K562 (cell line): ENCODE measurements at regions of chr6 and their contacts with region 1.

Region 1: DNA sequence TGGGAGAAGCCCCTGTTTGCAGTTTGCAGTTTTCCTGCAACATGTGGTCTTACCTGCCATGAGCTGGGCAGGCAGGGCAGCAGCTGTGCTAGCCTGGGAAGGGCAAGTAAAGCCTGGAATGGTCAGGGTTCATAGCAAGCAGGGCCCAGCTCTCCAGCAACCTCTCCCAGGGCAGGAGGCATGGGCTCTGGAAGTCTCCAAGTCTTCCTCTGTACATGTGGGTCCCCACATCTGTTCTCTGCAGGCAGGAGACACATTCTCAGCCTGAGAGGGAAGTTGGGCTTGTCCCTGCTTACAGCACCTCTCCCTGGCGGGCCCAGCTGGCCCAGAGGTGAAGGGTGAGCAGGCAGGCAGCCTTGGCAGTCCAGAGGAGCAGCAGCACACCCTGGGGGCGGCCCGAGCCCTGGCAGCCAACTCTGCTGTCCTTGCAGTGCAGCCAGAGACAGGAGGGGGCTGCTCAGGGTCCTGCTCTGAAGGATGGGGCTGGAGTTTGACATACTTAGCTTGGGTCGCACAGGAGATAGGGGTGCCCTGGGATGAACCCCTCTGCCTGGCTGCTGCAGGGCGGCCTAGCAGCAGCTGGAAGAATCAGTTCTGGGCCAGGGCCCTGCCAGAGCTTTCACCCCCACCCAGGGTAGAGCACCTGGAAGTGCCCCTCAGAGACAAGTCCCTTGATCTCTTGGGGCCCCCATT is 176.0 kb downstream of the MRPL14 start:
- DNase-seq: peak; percentile 63 to 78 (median 73)
- ATAC-seq: peak; percentile 85
- H3K4me3 ChIP-seq: no peak overlapping the region
- H3K27ac ChIP-seq: peak overlapping the region; percentile 37; the same call in 2 of the 3 replicates
- H3K4me1 ChIP-seq: peaks cover 29 to 61% of the 10 kb centered on the region in 2 experiments
- H3K27me3 ChIP-seq: no peaks in the 10 kb centered on the region
- CTCF ChIP-seq: peak; percentile 85 to 98 (median 97)
- EP300 ChIP-seq: no peak; the same call in 1 of the 2 replicates
- POLR2A ChIP-seq: no peak
- RAD21 ChIP-seq: peak; percentile 96 to 99

Region 2: DNA sequence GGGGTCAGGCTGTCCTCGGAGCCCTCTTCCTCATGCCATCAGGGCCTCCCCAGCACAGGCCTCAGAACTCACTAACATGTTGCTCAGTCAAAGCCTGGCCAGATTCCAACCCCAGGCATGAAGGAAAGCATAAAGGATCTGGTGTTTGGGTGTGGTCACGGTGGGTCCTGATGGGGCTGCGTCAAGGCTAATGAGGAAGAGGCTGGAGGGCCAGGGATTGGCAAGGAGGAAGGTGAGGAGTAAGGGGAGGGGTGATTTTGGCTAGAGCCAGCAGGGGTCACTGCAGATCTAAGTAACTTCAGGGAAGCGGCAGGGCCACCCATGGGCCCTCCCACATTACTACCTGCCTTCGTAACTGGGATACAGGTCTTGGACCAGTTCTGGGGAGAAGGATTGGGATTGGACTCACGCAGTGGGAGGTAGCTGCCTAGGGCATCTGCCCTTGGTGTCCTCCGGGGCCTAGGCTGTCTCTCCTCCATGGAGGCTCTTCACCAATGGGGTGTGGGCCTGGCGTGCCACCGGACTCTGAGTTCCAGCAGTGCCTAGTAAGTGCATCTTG is 227.4 kb before region 1 on chr6:
- CTCF ChIA-PET with region 1: no interaction called
- POLR2A ChIA-PET with region 1: no interaction called
- in situ Hi-C with region 1: no loop called
- intact Hi-C with region 1: loop called (anchors 1 kb)
- DNase-seq: peak; percentile 91 to 94 (median 93)
- ATAC-seq: peak; percentile 87
- H3K4me3 ChIP-seq: no peak overlapping the region
- H3K27ac ChIP-seq: peak overlapping the region; percentile 68; the same call in 1 of the 3 replicates
- H3K4me1 ChIP-seq: peaks cover 25 to 31% of the 10 kb centered on the region in 2 experiments
- H3K27me3 ChIP-seq: no peaks in the 10 kb centered on the region; a peak in 1 of 5 replicates
- CTCF ChIP-seq: peak; percentile 91 to 98 (median 97)
- EP300 ChIP-seq: 0 out of 2 replicates have a peak, but pooled peaks have one; percentile 2
- POLR2A ChIP-seq: no peak
- RAD21 ChIP-seq: peak; percentile 93 to 97

Region 3: GRCh38 chr6:43856005-43856765 is 95.0 kb before region 1 on chr6:
- CTCF ChIA-PET with region 1: no interaction called
- POLR2A ChIA-PET with region 1: no interaction called
- in situ Hi-C with region 1: no loop called
- intact Hi-C with region 1: loop called (anchors 1 kb)
- DNase-seq: peak; percentile 66 to 80 (median 72)
- ATAC-seq: peak; percentile 92
- H3K4me3 ChIP-seq: no peak overlapping the region
- H3K27ac ChIP-seq: no peak overlapping the region; the same call in 2 of the 3 replicates
- H3K4me1 ChIP-seq: peaks cover 6 to 8% of the 10 kb centered on the region in 2 experiments; a peak in 3 of 5 replicates
- H3K27me3 ChIP-seq: no peaks in the 10 kb centered on the region
- CTCF ChIP-seq: peak; percentile 83 to 89 (median 84)
- EP300 ChIP-seq: 0 out of 2 replicates have a peak, but pooled peaks have one; percentile 19
- POLR2A ChIP-seq: no peak
- RAD21 ChIP-seq: peak; percentile 89 to 92

Region 4: DNA sequence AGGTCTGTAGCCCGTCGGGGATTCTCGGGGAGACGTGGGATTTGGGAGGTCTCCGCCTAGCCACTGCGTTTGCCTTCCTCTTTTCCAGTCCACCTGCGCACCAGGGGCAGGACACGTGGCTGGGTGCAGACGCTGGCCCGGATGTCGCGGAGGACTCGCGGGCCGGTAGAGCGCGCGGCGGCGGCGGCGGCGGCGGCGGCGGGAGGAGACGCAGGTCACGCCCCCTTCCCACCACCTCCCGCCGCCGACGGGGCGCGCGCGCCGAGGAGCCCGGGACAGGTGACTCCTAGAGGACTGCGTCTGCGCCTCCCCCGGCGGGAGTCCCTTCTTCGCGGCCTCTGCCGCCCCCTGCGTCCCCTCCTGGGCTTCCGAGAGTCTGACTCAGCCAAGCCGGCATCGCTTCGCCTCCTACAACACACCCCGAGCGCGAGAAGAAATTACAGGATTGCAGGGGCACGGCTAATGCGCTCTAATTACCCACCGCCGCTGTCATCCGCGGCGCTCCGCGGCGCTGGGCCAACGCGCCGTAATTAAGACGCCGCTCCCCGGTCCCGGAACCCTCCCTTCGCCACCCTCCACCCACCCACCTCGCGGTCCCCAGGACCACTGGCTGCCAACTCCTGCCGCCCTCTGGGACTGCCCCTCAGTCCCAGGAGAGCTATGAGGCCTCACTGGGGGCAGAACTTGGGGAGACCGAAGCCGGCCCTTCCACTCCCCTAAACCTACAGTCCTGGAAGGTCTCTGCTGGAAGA is 51.6 kb after region 1 on chr6:
- CTCF ChIA-PET with region 1: no interaction called
- POLR2A ChIA-PET with region 1: no interaction called
- in situ Hi-C with region 1: no loop called
- intact Hi-C with region 1: loop called (anchors 5 kb)
- DNase-seq: no peak
- ATAC-seq: no peak
- H3K4me3 ChIP-seq: no peak overlapping the region
- H3K27ac ChIP-seq: no peak overlapping the region
- H3K4me1 ChIP-seq: peaks cover 27 to 31% of the 10 kb centered on the region in 2 experiments
- H3K27me3 ChIP-seq: no peaks in the 10 kb centered on the region
- CTCF ChIP-seq: no peak
- EP300 ChIP-seq: no peak
- POLR2A ChIP-seq: no peak
- RAD21 ChIP-seq: no peak

Region 5: DNA sequence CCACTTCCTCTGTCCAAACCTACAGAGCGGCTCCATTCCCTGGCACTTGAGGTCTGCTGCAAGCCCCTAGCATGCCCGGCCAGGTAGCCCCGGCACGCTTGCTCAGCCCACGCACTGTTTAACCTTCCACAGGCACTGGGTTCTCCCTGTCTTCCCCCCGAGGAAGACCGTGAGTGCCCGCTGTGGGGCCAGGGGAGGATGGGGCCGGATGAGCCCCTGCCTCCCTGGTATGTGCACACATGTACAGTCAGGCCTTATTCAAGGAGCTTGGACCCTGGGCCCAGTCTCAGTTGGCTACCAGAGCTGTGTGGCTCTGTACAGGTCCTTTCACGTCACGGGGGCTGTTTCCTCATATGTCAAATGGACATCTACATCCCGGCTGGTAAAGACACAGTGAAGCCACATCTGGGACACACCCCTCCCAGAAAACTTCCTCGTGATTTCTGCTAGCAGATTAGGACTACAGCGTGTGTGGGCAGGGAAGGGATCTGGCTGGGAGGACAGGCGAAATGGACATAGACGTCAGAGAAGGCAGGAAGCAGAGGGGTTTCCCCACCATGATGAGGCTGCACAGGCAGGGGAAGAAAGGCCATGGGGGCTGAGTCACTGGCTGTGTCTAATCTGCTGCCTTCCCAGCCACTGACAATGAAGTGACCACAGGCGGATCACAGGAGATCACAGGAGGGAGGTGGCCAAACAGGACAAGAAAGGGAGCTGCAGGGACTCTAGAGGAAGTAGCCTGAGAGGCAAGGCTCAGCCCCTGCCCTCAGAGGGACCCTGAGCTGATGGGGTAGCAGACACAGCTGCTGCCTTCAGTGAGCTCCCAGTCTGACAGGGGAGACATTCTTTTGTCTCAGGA is 113.1 kb after region 1 on chr6:
- CTCF ChIA-PET with region 1: no interaction called
- POLR2A ChIA-PET with region 1: no interaction called
- in situ Hi-C with region 1: no loop called
- intact Hi-C with region 1: loop called (anchors 1 kb)
- DNase-seq: peak; percentile 61 to 95 (median 80)
- ATAC-seq: peak; percentile 87
- H3K4me3 ChIP-seq: no peak overlapping the region
- H3K27ac ChIP-seq: peak overlapping the region; percentile 74
- H3K4me1 ChIP-seq: peaks cover 64 to 71% of the 10 kb centered on the region in 2 experiments
- H3K27me3 ChIP-seq: no peaks in the 10 kb centered on the region
- CTCF ChIP-seq: no peak; a peak in 1 of 6 replicates
- EP300 ChIP-seq: peak; percentile 82
- POLR2A ChIP-seq: peak; percentile 48; the same call in 1 of the 2 replicates
- RAD21 ChIP-seq: peak; percentile 26 to 39; a peak in 2 of 4 replicates

Region 6: DNA sequence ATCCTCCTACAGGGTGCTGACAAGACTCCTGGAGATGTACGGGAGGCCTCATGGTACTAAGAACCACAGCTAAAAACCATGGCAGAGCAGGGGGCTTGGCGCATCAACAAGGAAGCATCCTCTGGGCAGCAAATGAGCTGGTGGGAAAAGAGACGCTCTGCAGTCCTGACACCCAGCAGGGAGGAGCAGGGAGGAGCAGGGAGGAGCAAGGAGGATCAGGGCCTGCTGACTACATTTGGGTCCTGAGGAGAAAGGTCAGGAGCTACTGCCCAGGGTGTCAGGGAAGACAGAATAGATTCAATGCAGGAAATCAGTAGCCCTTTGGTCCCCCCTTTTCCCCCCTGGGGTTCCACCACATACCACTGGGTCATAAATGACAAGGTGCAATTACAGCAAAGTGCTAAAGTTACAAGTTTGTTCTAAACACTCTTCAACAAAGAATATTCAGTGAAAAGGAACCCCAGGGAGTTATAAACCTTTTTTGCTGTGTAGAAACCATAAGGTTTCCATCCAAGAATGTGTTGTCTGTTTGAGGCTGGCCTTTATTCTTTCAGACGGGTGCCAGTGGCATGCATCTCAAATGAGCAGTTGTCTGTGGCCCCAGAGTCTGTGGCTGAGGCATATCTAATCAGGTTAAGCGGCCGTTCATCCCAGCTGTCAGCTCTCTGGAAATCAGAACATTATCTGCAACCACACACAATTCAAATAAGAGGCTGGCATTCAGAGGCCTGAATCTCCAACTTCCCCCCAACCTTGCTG is 761.3 kb after region 1 on chr6:
- CTCF ChIA-PET with region 1: no interaction called
- POLR2A ChIA-PET with region 1: no interaction called
- in situ Hi-C with region 1: no loop called
- intact Hi-C with region 1: no loop called
- DNase-seq: no peak
- ATAC-seq: no peak
- H3K4me3 ChIP-seq: no peak overlapping the region
- H3K27ac ChIP-seq: no peak overlapping the region
- H3K4me1 ChIP-seq: no peaks in the 10 kb centered on the region
- H3K27me3 ChIP-seq: peaks cover 0 to 6% of the 10 kb centered on the region in 2 experiments; a peak in 1 of 5 replicates
- CTCF ChIP-seq: no peak
- EP300 ChIP-seq: no peak
- POLR2A ChIP-seq: no peak
- RAD21 ChIP-seq: no peak